ENCODE measurements at regions of chr7 and their contacts with region 1.

Region 1: GRCh38 chr7:135690566-135690965 is 28.3 kb downstream of the STMP1 start:
- DNase-seq: no peak
- CTCF ChIP-seq: no peak

Region 2: DNA sequence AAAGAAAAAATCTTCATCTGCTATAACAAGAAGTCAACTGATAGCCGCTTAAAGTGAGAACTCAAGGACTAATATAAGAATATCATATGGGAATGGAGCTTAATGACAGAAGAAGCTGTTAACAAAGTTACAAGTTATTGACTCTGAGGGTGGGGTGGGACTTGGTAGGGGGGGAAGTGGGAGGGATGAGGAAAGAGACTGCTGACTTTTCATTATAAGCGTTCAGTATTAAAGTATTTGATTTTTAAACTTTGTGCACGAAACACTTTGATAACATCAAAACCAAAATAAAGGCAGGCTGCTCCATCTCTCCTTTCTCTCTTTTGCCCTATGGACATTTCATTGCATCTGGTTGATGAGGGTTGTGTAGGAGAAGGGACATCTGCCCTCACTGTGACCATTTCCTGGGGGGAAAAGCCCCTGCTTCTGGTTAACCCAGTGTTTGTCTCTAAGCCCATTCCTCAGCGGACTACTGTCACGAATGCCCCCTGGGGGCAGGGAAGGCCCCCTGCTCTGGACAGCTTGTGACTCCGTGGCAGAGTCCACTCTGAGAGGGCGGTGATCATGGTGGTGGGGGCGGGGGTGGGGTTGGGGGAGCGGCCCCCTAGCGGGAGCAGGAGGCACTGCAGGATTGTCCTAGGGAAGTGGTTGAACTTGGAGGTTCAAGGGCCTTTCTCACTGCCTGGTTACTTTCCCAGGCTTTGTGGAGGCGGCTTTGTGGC is 20.0 kb after region 1 on chr7:
- CTCF ChIA-PET with region 1: interaction called, 15 read pairs
- POLR2A ChIA-PET with region 1: no interaction called
- DNase-seq: peak; percentile 71
- CTCF ChIP-seq: peak; percentile 7